ENCODE measurements at regions of chr3 and their contacts with region 1.

Region 1: GRCh38 chr3:13782501-13782900 is 97.4 kb downstream of the WNT7A start:
- DNase-seq: peak in 5 of 10 donors; percentile 33 to 71 (median 43)
- H3K4me3 ChIP-seq: peak overlapping the region in 11 of 59 donors; percentile 5 to 31 (median 16)
- H3K27ac ChIP-seq: peak overlapping the region in 48 of 59 donors; percentile 3 to 83 (median 56)
- H3K27me3 ChIP-seq: peaks cover 0 to 3% (median 0%) of the 10 kb centered on the region in 45 donors
- CTCF ChIP-seq: no peak

Region 2: DNA sequence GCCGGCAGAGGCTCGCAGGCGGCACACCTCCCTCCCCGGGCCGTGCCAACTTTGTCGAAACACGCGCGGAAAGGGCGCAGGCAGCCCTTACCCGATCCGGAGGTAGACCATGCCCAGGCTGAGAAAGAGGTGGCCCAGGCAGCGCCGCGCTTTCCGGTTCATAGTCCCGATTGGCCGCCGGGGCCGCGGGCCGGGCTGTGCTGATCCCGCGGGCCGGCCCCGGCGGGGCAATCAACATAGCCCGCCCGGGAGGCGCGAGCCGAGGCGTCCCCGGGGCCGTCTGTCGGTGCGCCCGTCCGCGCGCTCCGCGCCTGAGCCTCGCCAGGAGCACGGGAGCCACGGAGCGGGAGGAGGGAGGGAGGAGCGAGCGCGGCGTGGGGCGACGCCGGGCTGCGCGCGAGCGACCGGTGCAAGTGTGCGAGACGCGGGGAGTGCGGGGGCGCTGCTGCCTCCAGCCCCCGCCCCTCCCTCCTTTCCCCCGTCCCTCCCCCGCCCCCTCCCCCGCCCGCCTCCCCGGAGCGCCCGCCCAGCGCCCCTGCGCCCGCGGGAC is 97.2 kb after region 1 on chr3 and contains the start of gene WNT7A:
- intact Hi-C with region 1: loop called in 1 of 2 experiments (anchors 2 kb)
- DNase-seq: peak in 5 of 10 donors; percentile 35 to 60 (median 56)
- H3K4me3 ChIP-seq: peak within 1 kb of the TSS; percentile 30 to 71 (median 58)
- H3K27ac ChIP-seq: peak within 1 kb of the TSS in 35 of 59 donors; percentile 16 to 74 (median 49)
- H3K27me3 ChIP-seq: peaks cover 0 to 54% (median 15%) of the 10 kb centered on the region in 45 donors
- CTCF ChIP-seq: no peak
- total RNA-seq, gene WNT7A: 2.0 to 12.7 (median 6.4) TPM

Region 3: GRCh38 chr3:13963140-13963898 is 180.8 kb after region 1 on chr3:
- intact Hi-C with region 1: no loop called
- DNase-seq: no peak
- H3K4me3 ChIP-seq: no peak overlapping the region
- H3K27ac ChIP-seq: no peak overlapping the region
- H3K27me3 ChIP-seq: no peaks in the 10 kb centered on the region
- CTCF ChIP-seq: no peak

Measured in dorsolateral prefrontal cortex (tissue), 120 donors.